ENCODE measurements at regions of chr15 and their contacts with region 1.

Region 1: GRCh38 chr15:64162870-64163658 is at the start of gene PPIB:
- DNase-seq: peak; percentile 94 to 99
- H3K4me3 ChIP-seq: peak within 1 kb of the TSS; percentile 90 to 96
- H3K27ac ChIP-seq: peak within 1 kb of the TSS; percentile 91 to 95
- H3K4me1 ChIP-seq: peaks cover 18 to 22% of the 10 kb centered on the region in 2 donors
- H3K27me3 ChIP-seq: no peaks in the 10 kb centered on the region
- CTCF ChIP-seq: peak; percentile 17 to 58 (median 41)
- total RNA-seq, gene PPIB: 674 TPM

Region 2: DNA sequence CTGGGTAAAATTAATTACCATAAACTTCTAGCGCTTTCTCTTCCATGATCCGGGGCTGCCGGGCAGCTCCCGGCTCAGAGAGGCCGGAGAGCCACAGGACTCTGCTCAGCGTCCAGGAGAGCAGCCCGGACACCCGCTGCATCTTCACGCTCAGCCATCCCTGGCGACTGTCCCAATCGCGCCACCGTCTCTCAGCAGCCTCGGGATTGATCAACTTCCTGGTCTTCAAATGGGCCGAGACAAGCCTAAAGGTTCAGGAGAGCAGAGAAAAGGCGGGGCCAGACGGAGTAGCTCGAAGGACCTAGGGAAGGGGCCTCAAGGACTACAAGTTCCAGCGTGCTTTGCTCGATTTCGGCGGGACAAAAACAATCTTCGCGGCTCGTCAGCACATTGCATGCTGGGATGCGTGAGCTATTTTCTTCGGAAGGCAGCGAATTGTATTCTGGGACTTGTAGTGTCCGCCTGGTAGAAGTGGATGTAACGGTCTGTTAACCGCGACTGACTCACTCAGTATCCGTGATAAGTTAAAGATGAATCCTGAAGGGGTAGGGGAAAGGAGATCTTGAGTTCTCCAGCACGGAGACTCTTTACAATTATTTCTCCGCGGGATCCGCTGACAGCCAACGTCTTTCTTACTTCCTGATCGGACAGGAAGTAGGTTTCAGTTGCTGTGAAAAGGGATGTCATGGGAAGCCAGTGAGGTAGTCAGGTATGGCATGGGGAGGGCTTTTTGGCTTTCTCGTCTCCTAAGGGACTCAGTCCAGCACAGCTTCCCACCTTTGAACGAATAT is 69.2 kb before region 1 on chr15 and contains the start of gene CIAO2A:
- intact Hi-C with region 1: loop called (anchors 2 kb)
- DNase-seq: peak; percentile 91 to 98
- H3K4me3 ChIP-seq: peak within 1 kb of the TSS; percentile 59 to 79
- H3K27ac ChIP-seq: peak within 1 kb of the TSS; percentile 79 to 89
- H3K4me1 ChIP-seq: peaks cover 13 to 32% of the 10 kb centered on the region in 2 donors
- H3K27me3 ChIP-seq: no peaks in the 10 kb centered on the region
- CTCF ChIP-seq: no peak
- total RNA-seq, gene CIAO2A: 2.4 TPM

Region 3: GRCh38 chr15:64112904-64113303 is 50.2 kb before region 1 on chr15:
- intact Hi-C with region 1: no loop called
- DNase-seq: no peak
- H3K4me3 ChIP-seq: no peak overlapping the region
- H3K27ac ChIP-seq: no peak overlapping the region
- H3K4me1 ChIP-seq: peaks cover 0 to 4% of the 10 kb centered on the region in 2 donors
- H3K27me3 ChIP-seq: no peaks in the 10 kb centered on the region
- CTCF ChIP-seq: no peak

Region 4: DNA sequence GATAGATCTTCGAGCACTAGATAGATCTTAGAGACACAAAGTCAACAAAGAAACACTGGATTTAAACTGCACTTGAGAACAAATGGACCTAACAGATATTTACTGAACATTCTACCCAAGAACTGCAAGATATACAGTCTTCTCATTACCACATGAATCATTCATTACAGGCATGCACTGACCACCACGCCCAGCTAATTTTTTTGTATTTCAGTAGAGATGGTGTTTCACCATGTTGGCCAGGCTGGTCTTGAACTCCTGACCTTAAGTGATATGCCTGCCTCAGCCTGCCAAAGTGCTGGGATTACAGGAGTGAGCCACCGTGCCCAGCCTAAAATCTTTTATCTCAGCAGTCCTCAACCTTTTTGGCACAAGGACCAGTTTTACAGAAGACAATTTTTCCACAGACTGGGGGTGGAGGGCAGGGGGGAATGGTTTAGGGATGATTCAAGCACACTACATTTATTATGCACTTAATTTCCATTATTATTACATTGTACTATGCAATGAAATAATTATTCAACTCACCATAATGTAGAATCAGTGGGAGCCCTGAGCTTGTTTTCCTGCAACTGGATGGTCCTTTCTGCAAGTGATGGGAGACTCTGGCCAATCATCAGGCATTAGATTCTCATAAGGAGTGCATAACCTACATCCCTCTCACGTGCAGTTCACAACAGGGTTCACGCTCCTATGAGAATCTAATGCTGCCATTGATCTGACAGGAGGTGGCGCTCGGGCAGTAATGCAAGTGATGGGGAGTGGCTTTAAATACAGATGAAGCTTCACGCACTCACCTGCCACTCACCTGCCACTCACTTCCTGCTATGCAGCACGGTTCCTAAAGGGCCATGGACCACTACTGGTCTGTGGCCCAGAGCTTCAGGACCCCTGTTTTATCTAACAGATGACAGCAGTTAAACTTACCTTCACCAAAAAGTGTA is 171.2 kb after region 1 on chr15:
- intact Hi-C with region 1: no loop called
- DNase-seq: no peak
- H3K4me3 ChIP-seq: no peak overlapping the region
- H3K27ac ChIP-seq: no peak overlapping the region
- H3K4me1 ChIP-seq: no peaks in the 10 kb centered on the region
- H3K27me3 ChIP-seq: no peaks in the 10 kb centered on the region
- CTCF ChIP-seq: no peak

Region 5: DNA sequence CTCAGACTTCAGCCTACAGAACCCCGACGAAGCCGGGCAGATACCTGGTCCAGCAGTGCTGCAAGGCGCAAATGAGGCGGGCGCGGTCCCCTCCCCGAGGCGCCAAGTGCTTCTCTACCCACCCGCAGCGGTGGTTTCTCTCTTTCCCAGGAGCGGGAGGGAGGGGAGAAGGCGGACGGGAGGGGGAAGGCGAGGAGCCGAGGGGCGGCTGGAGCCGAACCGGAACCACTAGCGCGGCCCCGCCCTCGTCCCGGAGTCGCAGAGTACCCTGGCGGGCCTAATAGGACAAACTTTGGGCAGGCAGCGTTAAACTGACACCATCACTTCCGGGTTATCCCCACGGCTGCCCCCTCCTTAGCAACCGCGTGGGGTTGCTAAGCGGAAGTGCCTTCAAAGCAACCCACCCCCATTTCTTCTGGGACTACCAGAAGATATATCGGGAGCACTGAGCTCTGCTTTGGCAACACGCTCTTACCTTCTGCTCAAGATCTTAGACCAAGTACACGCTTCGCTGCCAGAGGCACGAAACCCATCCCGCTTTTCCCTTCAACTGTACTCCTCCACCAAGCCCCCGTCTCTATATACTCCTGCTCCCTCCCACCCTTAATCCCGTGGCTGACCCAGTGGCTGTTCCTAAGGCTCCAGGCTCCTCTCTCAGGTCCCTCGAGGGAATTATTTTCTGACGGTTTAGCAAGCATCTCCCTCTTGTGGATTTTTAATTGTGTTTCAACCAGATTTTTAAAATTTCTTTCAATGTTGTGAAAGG is 193.1 kb after region 1 on chr15 and contains the start of gene CSNK1G1:
- intact Hi-C with region 1: loop called (anchors 1 kb)
- DNase-seq: peak; percentile 84 to 97
- H3K4me3 ChIP-seq: peak within 1 kb of the TSS; percentile 82 to 97
- H3K27ac ChIP-seq: peak within 1 kb of the TSS; percentile 27 to 63
- H3K4me1 ChIP-seq: peaks cover 0 to 7% of the 10 kb centered on the region in 2 donors
- H3K27me3 ChIP-seq: no peaks in the 10 kb centered on the region
- CTCF ChIP-seq: peak; percentile 15 to 40 (median 24)
- total RNA-seq, gene CSNK1G1: 12.9 TPM

Region 6: DNA sequence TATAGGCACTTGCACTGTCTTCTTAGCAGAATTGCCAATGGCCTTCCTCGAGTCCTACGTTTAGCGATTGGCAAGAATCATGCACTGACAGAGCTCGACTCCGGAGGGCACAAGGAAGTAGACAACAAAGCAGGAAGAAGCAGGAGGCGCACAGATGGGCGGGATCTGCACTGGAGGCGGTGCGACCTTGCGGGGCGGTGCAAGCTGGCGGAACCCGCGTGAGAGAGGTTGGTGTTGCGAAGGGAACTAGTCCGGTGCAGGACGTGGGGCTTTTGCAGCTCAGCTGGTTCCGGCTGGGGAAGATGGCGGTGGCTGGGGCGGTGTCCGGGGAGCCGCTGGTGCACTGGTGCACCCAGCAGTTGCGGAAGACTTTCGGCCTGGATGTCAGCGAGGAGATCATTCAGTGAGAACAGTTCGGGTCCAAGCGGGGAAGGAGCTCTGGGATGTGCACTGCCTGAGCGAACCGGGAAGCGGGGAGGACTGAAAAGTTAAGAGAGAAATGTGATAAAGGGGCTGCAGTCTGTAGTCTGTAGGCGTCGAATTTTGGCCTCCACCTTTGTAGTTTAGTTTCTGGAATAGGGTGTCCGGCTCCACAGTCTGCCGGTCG is 224.6 kb after region 1 on chr15 and contains the start of gene TRIP4:
- intact Hi-C with region 1: loop called (anchors 2 kb)
- DNase-seq: peak; percentile 73 to 97
- H3K4me3 ChIP-seq: peak within 1 kb of the TSS; percentile 66 to 73
- H3K27ac ChIP-seq: peak within 1 kb of the TSS; percentile 64 to 71
- H3K4me1 ChIP-seq: peaks cover 0 to 4% of the 10 kb centered on the region in 2 donors
- H3K27me3 ChIP-seq: no peaks in the 10 kb centered on the region
- CTCF ChIP-seq: peak in 1 of 3 experiments; percentile 2
- total RNA-seq, gene TRIP4: 5.6 TPM

Region 7: GRCh38 chr15:64460206-64460734 is 297.2 kb after region 1 on chr15 and contains the start of gene ZNF609:
- intact Hi-C with region 1: loop called (anchors 2 kb)
- DNase-seq: peak; percentile 72 to 98
- H3K4me3 ChIP-seq: peak within 1 kb of the TSS; percentile 97 to 98
- H3K27ac ChIP-seq: peak within 1 kb of the TSS; percentile 83 to 93
- H3K4me1 ChIP-seq: peaks cover 4 to 30% of the 10 kb centered on the region in 2 donors
- H3K27me3 ChIP-seq: no peaks in the 10 kb centered on the region
- CTCF ChIP-seq: no peak
- total RNA-seq, gene ZNF609: 16.0 TPM

Measured in ascending aorta (tissue), 2 donors.